GM12878 (cell line): ENCODE measurements at regions of chr2 and their contacts with region 1.

Region 1: DNA sequence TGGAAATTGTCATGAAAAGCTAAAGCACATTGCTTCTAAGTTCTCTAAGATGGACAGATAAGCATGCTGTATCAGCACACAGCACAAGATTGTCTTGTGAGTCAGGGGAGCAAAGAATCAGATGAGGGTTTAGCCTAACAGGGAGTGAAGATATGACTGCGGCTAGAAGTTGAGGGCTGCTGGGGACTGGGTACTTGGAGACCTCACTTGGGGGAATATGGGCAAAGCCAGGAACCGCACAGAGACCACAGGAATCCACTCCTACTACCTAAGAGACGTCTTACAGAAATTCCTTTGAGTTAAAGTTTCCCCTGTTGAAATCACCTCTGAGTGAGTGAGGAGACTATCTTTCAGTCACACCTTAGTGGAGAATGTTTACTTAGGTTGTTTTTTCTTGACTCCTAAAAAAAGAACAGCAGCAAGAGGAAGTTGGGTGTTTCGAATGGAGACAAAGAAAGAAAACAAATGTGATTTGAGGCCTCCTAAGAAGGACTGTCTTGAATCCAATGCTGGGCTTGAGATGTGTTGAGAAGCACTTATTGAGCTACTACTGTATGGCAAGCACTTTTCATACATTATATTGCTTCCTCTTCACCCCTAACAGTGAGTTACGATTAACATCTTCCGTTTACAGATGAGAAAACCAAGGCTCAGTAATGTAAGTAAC is 100.7 kb downstream of the ANKRD44 start:
- DNase-seq: peak; percentile 76
- ATAC-seq: peak; percentile 47
- H3K4me3 ChIP-seq: peak overlapping the region; percentile 28
- H3K27ac ChIP-seq: peak overlapping the region; percentile 97
- H3K4me1 ChIP-seq: peaks cover 94% of the 10 kb centered on the region
- H3K27me3 ChIP-seq: no peaks in the 10 kb centered on the region
- CTCF ChIP-seq: no peak
- EP300 ChIP-seq: peak in 1 of 2 experiments; percentile 21; a peak in 2 of 4 replicates
- POLR2A ChIP-seq: no peak
- RAD21 ChIP-seq: no peak

Region 2: DNA sequence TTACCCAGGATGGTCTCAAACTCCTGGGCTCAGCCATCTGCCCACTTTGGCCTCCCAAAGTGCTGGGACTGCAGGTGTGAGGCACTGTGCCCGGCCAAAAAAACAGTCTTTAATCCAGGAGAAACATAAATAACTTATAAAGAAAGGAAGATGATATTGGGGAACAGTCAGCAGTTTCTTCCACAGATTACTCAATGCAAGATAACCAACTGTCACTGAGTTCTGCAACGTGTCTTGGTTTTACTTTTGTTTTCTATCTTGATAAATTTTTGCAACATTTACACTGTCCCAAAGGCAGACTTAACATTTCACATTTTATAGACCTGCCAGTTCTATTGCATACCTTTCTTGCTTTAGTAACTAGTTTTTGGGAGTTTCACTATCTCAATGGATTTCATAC is 29.6 kb after region 1 on chr2:
- CTCF ChIA-PET with region 1: interaction called, 6 read pairs
- POLR2A ChIA-PET with region 1: interaction called, 58 read pairs
- RAD21 ChIA-PET with region 1: interaction called, 58 read pairs
- SMC1A ChIA-PET with region 1: interaction called, 175 read pairs
- in situ Hi-C with region 1: no loop called
- intact Hi-C with region 1: no loop called
- DNase-seq: no peak
- ATAC-seq: peak; percentile 82
- H3K4me3 ChIP-seq: peak overlapping the region; percentile 56
- H3K27ac ChIP-seq: peak overlapping the region; percentile 77
- H3K4me1 ChIP-seq: peaks cover 49% of the 10 kb centered on the region
- H3K27me3 ChIP-seq: no peaks in the 10 kb centered on the region
- CTCF ChIP-seq: no peak
- EP300 ChIP-seq: no peak
- POLR2A ChIP-seq: no peak
- RAD21 ChIP-seq: no peak

Region 3: DNA sequence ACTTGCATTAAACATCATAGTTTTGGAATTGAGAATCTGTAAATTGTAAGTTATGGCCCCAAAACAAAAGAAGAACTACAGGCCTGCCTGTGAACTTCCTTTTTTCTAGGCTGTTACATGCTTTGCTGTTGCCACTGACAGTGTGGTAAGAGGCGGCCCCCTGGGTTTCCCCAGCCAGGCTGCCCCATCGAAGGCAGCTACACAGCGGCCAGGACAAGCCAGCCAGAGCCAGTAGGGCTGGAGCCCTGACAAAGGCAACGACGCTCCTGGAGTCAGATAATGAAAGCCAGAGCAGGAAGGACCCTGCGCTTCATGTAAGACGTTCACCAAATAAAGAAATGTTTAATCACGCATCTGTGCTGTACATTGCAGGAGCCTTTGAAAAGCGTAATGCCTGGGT is 45.7 kb after region 1 on chr2:
- CTCF ChIA-PET with region 1: interaction called, 15 read pairs
- POLR2A ChIA-PET with region 1: interaction called, 43 read pairs
- RAD21 ChIA-PET with region 1: interaction called, 61 read pairs
- SMC1A ChIA-PET with region 1: interaction called, 82 read pairs
- in situ Hi-C with region 1: no loop called
- intact Hi-C with region 1: loop called (anchors 2 kb)
- DNase-seq: peak; percentile 81
- ATAC-seq: peak; percentile 94
- H3K4me3 ChIP-seq: peak overlapping the region; percentile 59
- H3K27ac ChIP-seq: peak overlapping the region; percentile 97
- H3K4me1 ChIP-seq: peaks cover 31% of the 10 kb centered on the region
- H3K27me3 ChIP-seq: no peaks in the 10 kb centered on the region
- CTCF ChIP-seq: no peak
- EP300 ChIP-seq: peak; percentile 57 to 66; a peak in 3 of 4 replicates
- POLR2A ChIP-seq: peak; percentile 98
- RAD21 ChIP-seq: peak; percentile 20; the same call in 1 of the 2 replicates

Region 4: DNA sequence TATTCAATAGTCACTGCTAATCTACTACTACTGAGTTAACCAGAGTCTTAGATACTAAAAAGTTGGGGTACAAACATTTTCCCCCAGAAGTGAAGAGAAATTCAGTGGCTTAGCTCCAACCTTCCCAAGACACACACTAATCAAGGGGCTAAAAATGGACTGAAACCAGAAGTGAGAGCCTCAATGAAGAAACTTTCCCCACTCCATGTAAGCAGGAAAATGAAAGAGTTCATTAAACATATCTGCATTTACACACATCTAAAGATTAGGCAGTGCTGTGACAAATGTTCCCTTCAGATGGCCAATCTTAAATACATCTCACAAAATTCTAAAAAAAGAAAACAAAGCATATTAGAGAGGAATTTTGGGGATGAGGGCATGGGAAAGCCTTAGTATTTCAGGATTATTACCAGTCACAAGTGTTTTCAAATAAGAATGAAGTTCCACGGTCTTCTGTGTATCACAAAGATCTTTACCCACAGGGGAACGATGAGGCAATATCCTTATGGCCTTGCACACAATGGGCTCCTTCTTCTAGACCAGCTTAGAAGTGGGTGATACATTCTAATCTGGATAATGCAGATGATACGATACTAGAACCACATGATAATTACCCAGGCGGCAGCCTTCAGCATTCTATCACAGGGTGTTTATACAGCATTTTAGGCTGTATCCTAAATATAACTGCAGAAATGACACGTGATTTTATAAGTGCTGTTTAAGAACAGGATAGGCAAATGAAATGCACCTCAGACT is 83.6 kb after region 1 on chr2:
- CTCF ChIA-PET with region 1: interaction called, 10 read pairs
- POLR2A ChIA-PET with region 1: interaction called, 27 read pairs
- RAD21 ChIA-PET with region 1: interaction called, 408 read pairs
- SMC1A ChIA-PET with region 1: interaction called, 433 read pairs
- in situ Hi-C with region 1: no loop called
- intact Hi-C with region 1: no loop called
- DNase-seq: no peak
- ATAC-seq: peak; percentile 69
- H3K4me3 ChIP-seq: peak overlapping the region; percentile 43
- H3K27ac ChIP-seq: peak overlapping the region; percentile 95
- H3K4me1 ChIP-seq: peaks cover 54% of the 10 kb centered on the region
- H3K27me3 ChIP-seq: no peaks in the 10 kb centered on the region
- CTCF ChIP-seq: no peak
- EP300 ChIP-seq: peak in 1 of 2 experiments; percentile 18; a peak in 2 of 4 replicates
- POLR2A ChIP-seq: no peak
- RAD21 ChIP-seq: no peak

Region 5: GRCh38 chr2:197777823-197778407 is 568.0 kb after region 1 on chr2:
- CTCF ChIA-PET with region 1: no interaction called
- POLR2A ChIA-PET with region 1: no interaction called
- RAD21 ChIA-PET with region 1: no interaction called
- SMC1A ChIA-PET with region 1: no interaction called
- in situ Hi-C with region 1: no loop called
- intact Hi-C with region 1: no loop called
- DNase-seq: peak; percentile 12
- ATAC-seq: no peak
- H3K4me3 ChIP-seq: no peak overlapping the region
- H3K27ac ChIP-seq: no peak overlapping the region
- H3K4me1 ChIP-seq: no peaks in the 10 kb centered on the region
- H3K27me3 ChIP-seq: no peaks in the 10 kb centered on the region
- CTCF ChIP-seq: peak; percentile 47 to 69 (median 50); a peak in 4 of 6 replicates
- EP300 ChIP-seq: no peak
- POLR2A ChIP-seq: no peak
- RAD21 ChIP-seq: peak; percentile 85